Right ventricle myocardium inferior (tissue), 1 donor: ENCODE measurements at regions of chr3 and their contacts with region 1.

Region 1: DNA sequence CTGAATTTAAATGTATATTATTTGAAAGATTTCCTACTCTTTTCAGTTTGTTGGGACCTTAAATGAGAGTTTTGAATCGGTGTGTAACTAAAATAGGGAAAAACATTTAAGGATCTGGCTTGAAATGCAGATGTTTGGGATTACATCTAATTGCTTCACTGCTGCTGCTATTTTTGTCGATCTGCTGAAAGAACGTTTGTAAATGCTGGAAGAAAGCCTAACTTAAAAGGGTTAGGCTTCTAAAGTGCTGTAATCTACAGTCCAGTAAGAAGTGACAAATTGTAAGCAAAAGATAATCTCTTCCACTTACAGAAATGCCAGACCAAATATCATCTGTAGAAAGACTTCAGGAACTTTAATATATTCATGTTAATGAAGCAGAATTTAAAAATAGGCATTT is 691.6 kb downstream of the ZNF385D start:
- DNase-seq: no peak
- ATAC-seq: no peak

Region 2: GRCh38 chr3:20683910-20684309 is 375.5 kb before region 1 on chr3:
- intact Hi-C with region 1: loop called (anchors 10 kb)
- DNase-seq: no peak
- ATAC-seq: peak; percentile 76

Region 3: DNA sequence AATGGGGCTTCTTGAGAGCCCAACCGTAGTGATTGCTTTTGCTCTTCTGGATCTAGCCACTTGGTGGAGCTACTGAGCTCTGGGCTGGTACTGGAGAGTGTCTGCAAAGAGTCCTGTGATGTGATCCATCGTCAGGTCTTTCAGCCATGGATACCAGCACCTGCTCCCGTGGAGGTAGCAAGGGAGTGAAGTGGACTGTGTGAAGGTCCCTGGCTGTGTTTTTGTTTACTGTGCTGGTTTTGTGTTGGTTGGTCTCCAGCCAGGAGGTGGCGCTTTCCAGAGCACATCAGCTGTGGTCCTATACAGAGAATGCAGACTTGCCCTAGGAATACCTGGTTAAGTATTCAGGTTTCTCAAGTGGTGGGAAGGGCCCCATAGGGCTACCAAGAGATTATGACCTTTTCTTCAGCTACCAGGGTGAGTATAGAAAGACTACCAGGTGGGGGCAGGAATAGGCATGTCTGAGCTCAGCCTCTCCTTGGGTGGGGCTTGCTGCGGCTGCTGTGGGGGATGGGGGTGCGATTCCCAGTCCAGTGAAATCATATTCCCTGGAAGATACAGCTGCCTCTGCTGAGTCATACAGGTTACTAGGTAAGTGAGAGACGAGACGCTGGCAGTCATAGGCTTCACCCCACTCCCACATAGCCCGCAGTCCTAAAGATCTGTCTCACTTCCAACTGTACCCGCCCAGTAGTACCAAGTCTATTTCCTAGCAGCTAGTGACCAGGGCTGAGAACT is 42.1 kb before region 1 on chr3:
- intact Hi-C with region 1: no loop called
- DNase-seq: no peak
- ATAC-seq: no peak

Region 4: DNA sequence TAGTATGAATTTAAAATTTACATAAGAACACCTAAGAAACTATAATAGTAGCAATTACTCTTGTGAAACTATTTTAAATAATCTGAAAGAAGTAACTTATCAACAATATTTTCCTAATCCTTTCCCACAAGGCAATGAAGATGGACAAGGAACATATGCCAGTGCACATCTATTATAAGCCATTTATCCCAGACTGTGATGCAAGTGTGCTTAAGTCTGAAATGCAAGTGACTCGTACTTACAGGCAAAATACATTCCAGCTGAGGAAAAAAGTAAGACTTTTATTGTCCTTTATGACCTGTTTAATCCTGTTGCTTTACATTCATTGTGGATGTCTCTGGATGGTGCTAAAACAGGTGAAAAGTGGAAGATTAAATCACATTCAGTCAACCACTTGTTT is 17.8 kb before region 1 on chr3:
- intact Hi-C with region 1: no loop called
- DNase-seq: no peak
- ATAC-seq: no peak